ENCODE measurements at regions of chr18 and their contacts with region 1.

Region 1: GRCh38 chr18:48868468-48869466 is 82.0 kb downstream of the SMAD7 start:
- DNase-seq: peak; percentile 83
- H3K4me3 Mint-ChIP-seq: peak overlapping the region; percentile 73
- H3K27ac Mint-ChIP-seq: peak overlapping the region; percentile 97
- H3K4me1 Mint-ChIP-seq: peaks cover 28% of the 10 kb centered on the region
- H3K27me3 Mint-ChIP-seq: no peaks in the 10 kb centered on the region

Region 2: GRCh38 chr18:48663931-48664847 is 204.6 kb before region 1 on chr18:
- intact Hi-C with region 1: no loop called
- DNase-seq: peak; percentile 87
- H3K4me3 Mint-ChIP-seq: no peak overlapping the region
- H3K27ac Mint-ChIP-seq: no peak overlapping the region
- H3K4me1 Mint-ChIP-seq: no peaks in the 10 kb centered on the region
- H3K27me3 Mint-ChIP-seq: peaks cover 4% of the 10 kb centered on the region

Region 3: DNA sequence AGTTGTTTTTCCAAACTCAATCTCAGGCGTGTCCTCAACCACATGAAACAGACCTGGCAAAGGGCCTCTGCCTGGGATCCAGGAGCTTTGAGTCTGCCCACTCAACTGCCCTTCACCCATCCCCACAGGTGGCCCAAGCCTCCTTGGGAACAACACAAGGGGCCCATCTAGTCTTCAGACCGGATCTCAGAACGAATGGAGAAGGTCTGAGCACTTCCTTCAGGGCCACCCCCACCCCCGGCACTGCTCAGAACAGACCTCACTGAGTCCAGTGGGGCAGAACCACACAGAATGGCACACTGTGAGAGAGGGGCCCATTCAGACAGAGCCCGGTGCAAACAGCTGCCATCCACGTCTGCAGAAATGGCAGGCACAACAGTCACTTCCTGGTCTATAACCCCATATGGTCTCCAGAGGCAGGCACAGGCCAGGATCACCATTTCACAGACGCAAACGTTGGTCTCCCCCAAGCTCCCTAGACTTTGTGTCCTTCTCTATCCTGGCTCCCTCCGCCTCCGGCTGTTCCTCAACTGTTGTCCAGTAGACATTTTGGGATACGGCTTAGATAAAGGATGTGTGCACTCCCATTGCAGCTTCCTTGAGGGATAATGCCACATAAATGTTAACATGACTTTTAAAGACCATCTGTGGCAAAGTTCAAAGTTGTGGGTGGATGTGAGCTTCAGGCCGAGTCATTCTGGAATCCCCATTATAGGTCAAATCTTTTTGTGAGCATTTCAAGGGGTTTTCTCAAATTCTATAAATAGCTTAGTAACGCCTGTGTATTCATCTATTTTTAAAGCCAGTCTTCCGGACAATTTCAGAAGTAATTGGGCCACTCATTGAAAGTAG is 67.7 kb before region 1 on chr18:
- intact Hi-C with region 1: loop called (anchors 1 kb)
- DNase-seq: no peak
- H3K4me3 Mint-ChIP-seq: peak overlapping the region; percentile 66
- H3K27ac Mint-ChIP-seq: peak overlapping the region; percentile 97
- H3K4me1 Mint-ChIP-seq: peaks cover 67% of the 10 kb centered on the region
- H3K27me3 Mint-ChIP-seq: no peaks in the 10 kb centered on the region

Region 4: DNA sequence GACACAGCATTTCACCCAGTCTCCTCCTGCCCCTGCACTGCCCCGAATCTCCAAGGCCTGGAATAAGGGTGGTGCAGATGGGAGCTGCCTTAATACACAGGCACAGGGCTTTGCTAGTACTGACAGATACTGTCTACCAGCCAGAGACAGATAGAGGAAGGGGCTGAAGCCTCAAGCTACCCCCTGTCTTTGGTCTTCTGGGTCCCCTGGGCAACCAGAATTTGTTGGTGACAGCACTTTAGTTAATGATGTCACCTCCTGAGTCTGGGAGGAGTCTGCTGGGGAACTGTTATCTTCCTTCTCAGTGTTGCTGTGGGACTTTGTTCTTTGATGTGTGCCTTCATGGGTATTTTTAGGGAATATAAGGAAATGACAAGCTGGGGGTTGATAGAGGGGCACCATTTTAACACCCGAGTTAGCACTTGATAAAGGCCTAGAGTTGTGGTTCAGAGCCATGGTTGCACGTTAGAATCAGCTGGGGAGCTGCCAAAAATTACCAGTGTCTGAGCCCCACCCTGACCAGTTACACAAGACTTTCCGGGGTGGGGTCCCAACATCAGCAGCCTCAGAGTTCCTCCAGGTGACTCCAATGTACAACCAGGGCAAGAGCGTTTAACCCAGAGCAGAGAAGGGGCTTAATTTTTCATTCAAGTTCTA is 54.8 kb before region 1 on chr18:
- intact Hi-C with region 1: loop called (anchors 1 kb)
- DNase-seq: peak; percentile 86
- H3K4me3 Mint-ChIP-seq: peak overlapping the region; percentile 27
- H3K27ac Mint-ChIP-seq: peak overlapping the region; percentile 85
- H3K4me1 Mint-ChIP-seq: peaks cover 51% of the 10 kb centered on the region
- H3K27me3 Mint-ChIP-seq: peaks cover 2% of the 10 kb centered on the region

Region 5: DNA sequence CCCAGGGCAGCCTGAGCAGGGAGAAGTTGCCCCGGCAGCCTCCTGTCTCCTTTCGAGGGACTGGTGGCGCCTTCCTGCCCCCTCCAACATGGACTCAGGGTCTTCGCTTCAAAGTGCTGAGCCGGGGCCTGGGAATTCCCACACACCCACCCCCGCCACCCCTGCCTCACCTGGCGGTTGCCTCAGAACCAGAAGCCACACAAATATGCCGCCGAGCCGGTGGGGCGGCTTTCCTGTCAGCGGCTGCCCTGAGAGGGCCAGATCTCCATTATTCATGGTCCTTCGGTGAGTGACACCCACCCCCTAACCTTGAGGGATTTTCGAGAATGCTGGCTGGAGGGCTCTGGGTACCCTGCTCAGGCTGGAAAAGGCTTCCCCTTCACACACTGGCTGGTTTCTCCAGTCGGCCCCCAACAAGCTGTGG is 10.3 kb after region 1 on chr18:
- intact Hi-C with region 1: no loop called
- DNase-seq: no peak
- H3K4me3 Mint-ChIP-seq: no peak overlapping the region
- H3K27ac Mint-ChIP-seq: no peak overlapping the region
- H3K4me1 Mint-ChIP-seq: peaks cover 15% of the 10 kb centered on the region
- H3K27me3 Mint-ChIP-seq: no peaks in the 10 kb centered on the region

Region 6: GRCh38 chr18:48928787-48929186 is 60.0 kb after region 1 on chr18:
- intact Hi-C with region 1: loop called (anchors 1 kb)
- DNase-seq: peak; percentile 89
- H3K4me3 Mint-ChIP-seq: peak overlapping the region; percentile 84
- H3K27ac Mint-ChIP-seq: peak overlapping the region; percentile 89
- H3K4me1 Mint-ChIP-seq: peaks cover 89% of the 10 kb centered on the region
- H3K27me3 Mint-ChIP-seq: no peaks in the 10 kb centered on the region

Measured in activated CD4-positive, alpha-beta T cell treated with anti-CD3 and anti-CD28 coated beads, Interleukin-2, amount 10 ng/mL, durations not matched to agents 24 days and 14 days (primary cell).